K562 (cell line): ENCODE measurements at regions of chr9 and their contacts with region 1.

Region 1: DNA sequence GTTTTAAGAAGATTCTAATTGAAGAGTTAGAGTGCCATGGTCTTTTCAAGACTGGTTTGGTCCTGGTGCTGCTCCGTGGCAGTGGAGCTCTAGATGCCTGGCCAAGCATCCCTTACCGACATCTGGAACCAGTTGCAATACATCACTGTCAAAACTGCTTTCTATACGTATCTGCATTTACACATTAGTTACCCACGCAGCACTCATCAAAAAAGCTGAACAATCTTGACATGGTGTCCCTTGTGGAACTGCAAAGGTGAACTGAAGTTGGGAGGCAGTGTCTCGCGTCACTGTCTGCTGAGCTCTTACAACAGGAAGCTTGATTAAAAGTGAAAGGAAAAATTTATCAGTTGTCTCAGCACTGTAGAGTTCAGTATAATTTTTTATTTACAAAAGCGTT is 82.6 kb downstream of the PBX3 start:
- DNase-seq: no peak
- ATAC-seq: no peak
- H3K4me3 ChIP-seq: no peak overlapping the region
- H3K27ac ChIP-seq: no peak overlapping the region
- H3K4me1 ChIP-seq: no peaks in the 10 kb centered on the region
- H3K27me3 ChIP-seq: no peaks in the 10 kb centered on the region; a peak in 2 of 5 replicates
- CTCF ChIP-seq: no peak
- EP300 ChIP-seq: no peak
- POLR2A ChIP-seq: no peak
- RAD21 ChIP-seq: no peak

Region 2: DNA sequence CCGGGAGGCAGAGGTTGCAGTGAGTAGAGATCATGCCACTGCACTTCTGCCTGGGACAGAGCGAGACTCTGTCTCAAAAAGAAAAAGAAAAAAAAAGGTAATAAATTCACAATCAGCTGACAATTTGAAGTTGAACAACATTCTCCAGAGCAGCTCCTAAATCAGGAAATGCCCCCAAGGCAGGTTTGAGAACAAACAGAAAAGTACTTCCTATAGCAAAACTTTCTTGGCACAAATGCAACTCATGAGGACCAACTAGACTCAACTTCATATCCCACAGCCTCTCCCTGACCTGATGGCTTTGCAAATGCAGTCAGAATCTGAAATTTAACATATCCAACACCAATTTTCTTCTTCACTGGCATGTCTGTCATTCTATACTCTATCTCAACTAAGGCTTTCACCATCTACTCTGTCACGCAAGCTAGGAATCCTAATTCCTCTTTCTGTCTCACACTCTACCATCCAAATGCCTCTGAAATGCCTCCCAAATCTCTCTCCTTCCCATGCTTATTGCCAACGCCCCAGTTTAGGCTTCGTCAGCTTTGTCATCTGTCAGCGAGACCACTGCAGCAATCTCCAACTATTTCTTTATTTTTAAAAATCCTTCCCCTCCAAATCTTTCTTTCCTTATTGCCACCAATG is 236.0 kb before region 1 on chr9:
- CTCF ChIA-PET with region 1: no interaction called
- POLR2A ChIA-PET with region 1: no interaction called
- in situ Hi-C with region 1: no loop called
- intact Hi-C with region 1: no loop called
- DNase-seq: no peak
- ATAC-seq: no peak
- H3K4me3 ChIP-seq: no peak overlapping the region
- H3K27ac ChIP-seq: no peak overlapping the region
- H3K4me1 ChIP-seq: no peaks in the 10 kb centered on the region
- H3K27me3 ChIP-seq: no peaks in the 10 kb centered on the region
- CTCF ChIP-seq: no peak
- EP300 ChIP-seq: no peak
- POLR2A ChIP-seq: no peak
- RAD21 ChIP-seq: no peak

Region 3: GRCh38 chr9:125758986-125759763 is 70.6 kb before region 1 on chr9:
- CTCF ChIA-PET with region 1: no interaction called
- POLR2A ChIA-PET with region 1: interaction called, 3 read pairs
- in situ Hi-C with region 1: no loop called
- intact Hi-C with region 1: loop called (anchors 10 kb)
- DNase-seq: no peak
- ATAC-seq: no peak
- H3K4me3 ChIP-seq: no peak overlapping the region
- H3K27ac ChIP-seq: no peak overlapping the region
- H3K4me1 ChIP-seq: no peaks in the 10 kb centered on the region
- H3K27me3 ChIP-seq: peaks cover 4 to 5% of the 10 kb centered on the region in 2 experiments; a peak in 3 of 5 replicates
- CTCF ChIP-seq: no peak
- EP300 ChIP-seq: no peak
- POLR2A ChIP-seq: no peak
- RAD21 ChIP-seq: no peak